CD8-positive, alpha-beta memory T cell (primary cell): ENCODE measurements at regions of chr14 and their contacts with region 1.

Region 1: GRCh38 chr14:77124345-77125280 is 17.0 kb downstream of the ZDHHC22 start:
- DNase-seq: peak; percentile 55 to 76 (median 63)
- H3K4me3 ChIP-seq: peak overlapping the region; percentile 84
- H3K4me3 Mint-ChIP-seq: peak overlapping the region; percentile 76 to 87 (median 82)
- H3K27ac ChIP-seq: peak overlapping the region; percentile 64
- H3K27ac Mint-ChIP-seq: peak overlapping the region; percentile 14 to 97 (median 88)
- H3K4me1 ChIP-seq: peaks cover 42% of the 10 kb centered on the region
- H3K4me1 Mint-ChIP-seq: peaks cover 29 to 57% (median 53%) of the 10 kb centered on the region in 3 donors
- H3K27me3 ChIP-seq: peaks cover 9% of the 10 kb centered on the region
- H3K27me3 Mint-ChIP-seq: peaks cover 9 to 14% of the 10 kb centered on the region in 2 donors

Region 2: GRCh38 chr14:77111043-77111442 is 13.6 kb before region 1 on chr14:
- CTCF ChIA-PET with region 1: interaction called, 19 read pairs
- POLR2A ChIA-PET with region 1: interaction called, 3 read pairs
- DNase-seq: no peak
- H3K4me3 ChIP-seq: no peak overlapping the region
- H3K4me3 Mint-ChIP-seq: no peak overlapping the region
- H3K27ac ChIP-seq: no peak overlapping the region
- H3K27ac Mint-ChIP-seq: no peak overlapping the region
- H3K4me1 ChIP-seq: no peaks in the 10 kb centered on the region
- H3K4me1 Mint-ChIP-seq: peaks cover 0 to 7% (median 0%) of the 10 kb centered on the region in 3 donors
- H3K27me3 ChIP-seq: no peaks in the 10 kb centered on the region
- H3K27me3 Mint-ChIP-seq: no peaks in the 10 kb centered on the region